ENCODE measurements at regions of chr2 and their contacts with region 1.

Region 1: DNA sequence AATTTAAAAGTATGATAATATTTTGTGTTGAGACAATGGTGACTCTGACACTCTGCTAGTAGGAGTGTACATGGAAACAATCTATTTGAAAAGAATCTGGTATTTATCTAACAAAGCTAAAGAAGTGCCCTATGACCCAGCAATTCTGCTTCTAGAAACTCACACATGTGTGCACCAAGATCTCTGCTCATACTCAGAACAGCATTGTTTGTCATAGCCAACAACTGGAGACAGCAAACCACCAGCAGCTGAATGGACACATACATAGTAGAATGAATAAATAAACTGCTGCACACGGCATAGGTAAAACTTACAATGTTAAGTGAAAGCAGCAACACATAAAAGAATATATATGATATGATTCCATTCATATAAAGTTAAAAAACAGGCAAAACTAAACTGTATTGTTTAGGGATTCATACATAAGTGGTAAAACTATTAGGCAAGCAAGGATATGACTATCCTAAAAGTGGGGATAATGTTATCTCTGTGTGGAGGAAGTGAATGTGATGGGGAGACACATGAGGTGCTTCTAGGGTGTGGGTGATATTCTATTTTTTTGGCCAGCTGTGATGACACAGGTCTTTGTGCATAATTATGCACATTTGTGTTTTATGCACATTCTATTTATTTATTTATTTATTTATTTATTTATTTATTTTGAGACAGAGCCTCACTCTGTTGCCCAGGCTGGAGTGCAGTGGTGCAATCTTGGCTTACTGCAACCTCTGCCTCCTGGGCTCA is 71.1 kb downstream of the RFTN2 start:
- DNase-seq: no peak
- H3K4me3 Mint-ChIP-seq: no peak overlapping the region
- H3K27ac Mint-ChIP-seq: no peak overlapping the region
- H3K4me1 Mint-ChIP-seq: peaks cover 4% of the 10 kb centered on the region
- H3K27me3 Mint-ChIP-seq: peaks cover 4% of the 10 kb centered on the region

Region 2: GRCh38 chr2:197641666-197642065 is 37.4 kb after region 1 on chr2:
- intact Hi-C with region 1: loop called (anchors 2 kb)
- DNase-seq: no peak
- H3K4me3 Mint-ChIP-seq: no peak overlapping the region
- H3K27ac Mint-ChIP-seq: no peak overlapping the region
- H3K4me1 Mint-ChIP-seq: no peaks in the 10 kb centered on the region
- H3K27me3 Mint-ChIP-seq: peaks cover 10% of the 10 kb centered on the region